ENCODE measurements at regions of chr3 and their contacts with region 1.

Region 1: DNA sequence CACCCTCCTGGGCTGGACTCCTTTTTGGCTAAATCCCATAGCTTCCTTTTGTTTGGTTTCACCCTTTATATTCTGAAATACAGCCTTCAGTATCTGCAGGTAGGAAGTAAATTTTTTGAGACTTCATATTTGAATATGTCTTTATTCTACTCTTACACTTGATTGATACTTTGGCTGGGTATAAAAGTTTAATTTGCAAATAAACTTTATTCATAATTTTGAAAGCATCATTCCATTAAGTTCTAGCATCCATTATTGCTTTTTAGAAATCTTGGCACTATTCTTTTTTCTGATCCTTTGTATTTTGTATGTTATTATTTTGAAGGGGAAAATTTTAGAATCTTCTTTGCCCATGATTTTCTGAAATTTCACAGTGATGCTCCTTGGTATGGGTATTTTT is 41.3 kb upstream of the FILIP1L start:
- DNase-seq: no peak
- H3K4me3 ChIP-seq: no peak overlapping the region
- H3K27ac ChIP-seq: no peak overlapping the region
- H3K4me1 ChIP-seq: no peaks in the 10 kb centered on the region
- CTCF ChIP-seq: no peak

Region 2: GRCh38 chr3:100144251-100144866 is 11.2 kb before region 1 on chr3:
- CTCF ChIA-PET with region 1: no interaction called
- POLR2A ChIA-PET with region 1: interaction called, 10 read pairs
- intact Hi-C with region 1: no loop called
- DNase-seq: no peak
- H3K4me3 ChIP-seq: no peak overlapping the region
- H3K27ac ChIP-seq: no peak overlapping the region
- H3K4me1 ChIP-seq: no peaks in the 10 kb centered on the region
- CTCF ChIP-seq: no peak